ENCODE measurements at regions of chr14 and their contacts with region 1.

Region 1: DNA sequence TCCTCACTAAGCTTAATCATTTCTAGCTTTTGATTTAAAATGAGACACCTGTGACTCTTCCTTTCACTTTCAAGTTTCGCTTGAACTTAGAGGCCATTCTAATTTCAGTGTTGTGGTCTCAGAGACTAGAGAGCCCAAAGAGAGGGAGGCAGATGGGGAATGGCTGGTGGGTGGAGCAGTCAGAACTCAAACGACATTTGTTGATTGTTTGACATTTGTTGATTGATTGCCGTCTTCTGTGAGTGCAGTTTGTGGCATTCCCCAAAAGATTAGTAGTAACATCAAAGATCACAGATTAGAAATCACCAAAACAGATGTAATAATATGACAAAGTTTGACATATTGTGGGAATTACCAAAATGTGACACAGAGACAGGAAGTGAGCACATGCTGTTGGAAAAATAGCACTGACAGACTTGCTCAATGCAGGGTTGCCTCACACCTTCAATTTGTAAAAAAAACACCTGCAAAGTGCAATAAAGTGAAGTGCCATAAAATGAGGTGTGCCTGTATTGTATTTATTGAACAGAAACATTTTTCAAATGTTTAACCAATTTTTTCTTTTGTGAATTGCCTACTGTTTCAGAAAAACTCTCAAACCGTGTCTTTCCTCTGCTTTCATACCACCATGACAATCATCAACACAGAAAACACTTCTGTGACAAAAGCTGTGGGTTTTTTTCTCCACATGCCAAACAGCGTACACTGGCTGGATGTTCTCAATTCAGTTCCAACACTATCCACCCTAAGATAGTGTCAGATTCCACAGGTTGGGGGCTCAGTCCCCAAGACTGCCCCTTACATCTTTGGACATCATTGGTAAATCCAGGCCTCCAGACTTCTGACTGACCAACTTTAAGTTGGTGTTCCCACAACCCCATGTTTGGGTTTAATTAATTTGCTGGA is 376.3 kb upstream of the RGS6 start:
- DNase-seq: peak; percentile 76
- H3K4me3 Mint-ChIP-seq: peak overlapping the region; percentile 55
- H3K27ac Mint-ChIP-seq: peak overlapping the region; percentile 98
- H3K4me1 Mint-ChIP-seq: peaks cover 75% of the 10 kb centered on the region
- H3K27me3 Mint-ChIP-seq: no peaks in the 10 kb centered on the region

Region 2: DNA sequence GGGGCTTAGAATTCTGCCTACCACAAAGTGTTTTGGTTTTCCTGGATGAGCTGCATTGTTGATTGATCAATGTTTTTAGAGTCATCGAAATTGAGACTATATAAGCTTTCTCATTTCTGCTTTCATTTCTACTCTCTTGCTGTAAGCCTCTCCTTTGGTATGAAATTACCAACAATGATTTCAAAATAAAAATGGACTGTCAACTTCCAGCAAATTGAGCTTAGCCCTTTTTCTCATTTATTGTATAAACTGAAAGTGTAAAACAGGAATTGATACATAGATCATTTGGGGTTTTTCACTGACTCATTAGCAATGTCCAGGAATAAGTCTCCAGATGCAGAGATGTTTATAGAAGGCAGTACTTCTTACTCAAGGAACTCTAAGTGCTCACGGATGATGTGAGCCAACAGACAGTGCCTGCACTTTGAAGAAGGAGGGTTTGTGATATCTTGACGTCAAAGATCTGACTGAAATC is 668.7 kb before region 1 on chr14:
- CTCF ChIA-PET with region 1: no interaction called
- POLR2A ChIA-PET with region 1: no interaction called
- intact Hi-C with region 1: loop called (anchors 10 kb)
- DNase-seq: peak; percentile 25
- H3K4me3 Mint-ChIP-seq: peak overlapping the region; percentile 49
- H3K27ac Mint-ChIP-seq: peak overlapping the region; percentile 85
- H3K4me1 Mint-ChIP-seq: peaks cover 82% of the 10 kb centered on the region
- H3K27me3 Mint-ChIP-seq: no peaks in the 10 kb centered on the region

Region 3: DNA sequence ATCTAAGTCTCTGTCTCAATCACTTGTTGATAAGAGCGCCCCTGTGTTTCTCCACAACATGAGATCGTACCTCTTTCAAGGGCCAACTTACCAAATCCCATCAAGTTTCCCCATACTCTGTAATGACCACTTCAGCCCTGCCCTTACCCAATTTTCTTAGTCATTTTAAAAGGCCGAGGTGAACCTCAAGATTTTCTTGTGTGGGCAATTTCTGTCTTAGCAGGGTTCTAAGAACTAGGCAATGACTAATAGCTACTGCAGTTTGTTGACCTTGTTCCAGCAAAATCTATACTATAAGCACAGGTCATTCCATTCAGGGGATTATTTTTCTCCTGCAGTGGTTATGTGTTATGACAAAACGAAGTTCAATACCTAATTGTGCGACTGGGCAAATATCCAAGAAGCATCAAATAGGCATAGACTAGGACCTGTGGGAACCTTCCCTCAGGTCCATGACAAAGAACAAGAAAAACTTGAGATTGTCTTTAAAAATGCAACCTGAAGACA is 288.8 kb before region 1 on chr14:
- CTCF ChIA-PET with region 1: no interaction called
- POLR2A ChIA-PET with region 1: no interaction called
- intact Hi-C with region 1: loop called (anchors 1 kb)
- DNase-seq: peak; percentile 49
- H3K4me3 Mint-ChIP-seq: peak overlapping the region; percentile 48
- H3K27ac Mint-ChIP-seq: peak overlapping the region; percentile 77
- H3K4me1 Mint-ChIP-seq: peaks cover 37% of the 10 kb centered on the region
- H3K27me3 Mint-ChIP-seq: no peaks in the 10 kb centered on the region

Region 4: DNA sequence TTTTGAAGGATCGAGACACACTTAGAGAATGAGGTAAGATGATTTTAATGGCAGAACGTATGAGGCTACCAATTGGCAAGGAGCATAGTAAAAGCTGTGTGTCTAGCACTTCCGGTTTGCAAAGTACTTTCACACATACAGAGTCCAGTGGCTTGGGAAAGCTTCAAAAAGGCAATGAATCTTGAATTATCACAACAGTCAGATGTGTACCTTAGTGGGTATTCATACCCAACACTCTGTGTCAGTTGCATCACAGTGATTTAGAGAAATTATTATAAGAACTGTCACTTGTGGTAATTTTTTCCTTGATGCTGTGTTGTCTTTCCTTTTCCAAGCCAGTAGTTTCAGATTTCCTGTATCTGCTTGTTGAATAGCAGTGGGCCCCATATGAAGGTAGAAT is 224.5 kb before region 1 on chr14:
- CTCF ChIA-PET with region 1: interaction called, 3 read pairs
- POLR2A ChIA-PET with region 1: interaction called, 11 read pairs
- intact Hi-C with region 1: loop called (anchors 1 kb)
- DNase-seq: no peak
- H3K4me3 Mint-ChIP-seq: no peak overlapping the region
- H3K27ac Mint-ChIP-seq: peak overlapping the region; percentile 44
- H3K4me1 Mint-ChIP-seq: peaks cover 59% of the 10 kb centered on the region
- H3K27me3 Mint-ChIP-seq: no peaks in the 10 kb centered on the region

Region 5: DNA sequence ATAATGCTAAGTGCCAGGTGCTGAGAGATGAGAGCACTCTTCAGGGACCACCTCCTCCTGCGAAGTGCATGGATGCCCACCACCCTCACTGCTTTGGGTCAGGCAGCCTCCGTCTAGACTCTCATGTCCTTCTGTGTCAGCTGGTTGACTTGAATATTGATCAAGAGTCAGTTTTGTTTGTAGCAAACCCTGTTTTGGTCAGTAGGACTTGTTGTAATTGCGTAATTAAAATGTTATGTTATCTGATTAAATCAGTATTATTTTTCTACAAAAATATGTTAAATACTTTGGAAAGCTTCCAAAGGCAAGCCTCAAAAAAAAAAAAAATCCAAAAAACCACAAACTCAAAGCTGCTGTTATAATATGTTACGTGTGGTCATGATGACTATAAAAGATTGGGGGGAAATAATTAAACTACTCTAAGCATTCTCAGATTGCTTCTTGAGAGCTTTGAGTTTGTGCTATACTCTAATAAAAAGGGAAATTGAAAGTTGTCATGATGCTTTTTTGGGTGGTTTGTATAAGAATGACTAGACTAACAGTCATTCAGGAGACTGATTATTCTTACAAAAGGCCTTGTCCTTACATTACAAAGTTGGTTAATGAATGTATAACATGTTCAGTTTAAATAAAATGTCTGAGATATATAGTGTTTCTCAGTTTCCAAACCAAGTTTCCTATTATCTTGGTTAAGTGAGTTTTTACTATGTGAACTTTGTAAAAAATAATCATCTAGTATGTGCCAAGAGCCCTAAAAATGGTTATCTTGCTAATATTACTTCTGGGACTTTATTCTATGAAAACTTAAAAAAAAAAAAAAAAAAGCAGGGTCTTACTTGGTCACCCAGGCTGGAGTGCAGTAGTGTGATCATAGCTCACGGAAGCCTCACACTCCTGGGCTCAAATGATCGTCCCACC is 83.6 kb before region 1 on chr14:
- CTCF ChIA-PET with region 1: interaction called, 3 read pairs
- POLR2A ChIA-PET with region 1: interaction called, 3 read pairs
- intact Hi-C with region 1: loop called (anchors 1 kb)
- DNase-seq: no peak
- H3K4me3 Mint-ChIP-seq: no peak overlapping the region
- H3K27ac Mint-ChIP-seq: no peak overlapping the region
- H3K4me1 Mint-ChIP-seq: peaks cover 34% of the 10 kb centered on the region
- H3K27me3 Mint-ChIP-seq: no peaks in the 10 kb centered on the region

Region 6: GRCh38 chr14:71566276-71566675 is 10.4 kb after region 1 on chr14:
- CTCF ChIA-PET with region 1: no interaction called
- POLR2A ChIA-PET with region 1: no interaction called
- intact Hi-C with region 1: no loop called
- DNase-seq: no peak
- H3K4me3 Mint-ChIP-seq: no peak overlapping the region
- H3K27ac Mint-ChIP-seq: no peak overlapping the region
- H3K4me1 Mint-ChIP-seq: peaks cover 9% of the 10 kb centered on the region
- H3K27me3 Mint-ChIP-seq: no peaks in the 10 kb centered on the region

Region 7: GRCh38 chr14:71591929-71592328 is 36.0 kb after region 1 on chr14:
- CTCF ChIA-PET with region 1: interaction called, 5 read pairs
- POLR2A ChIA-PET with region 1: interaction called, 7 read pairs
- intact Hi-C with region 1: loop called (anchors 1 kb)
- DNase-seq: peak; percentile 53
- H3K4me3 Mint-ChIP-seq: no peak overlapping the region
- H3K27ac Mint-ChIP-seq: peak overlapping the region; percentile 29
- H3K4me1 Mint-ChIP-seq: peaks cover 41% of the 10 kb centered on the region
- H3K27me3 Mint-ChIP-seq: no peaks in the 10 kb centered on the region

Measured in activated CD4-positive, alpha-beta memory T cell treated with anti-CD3 and anti-CD28 coated beads for 36 hours (primary cell).